Activated CD8-positive, alpha-beta T cell treated with anti-CD3 and anti-CD28 coated beads for 36 hours (primary cell): ENCODE measurements at regions of chr17 and their contacts with region 1.

Region 1: GRCh38 chr17:40474419-40475002 is 26.9 kb downstream of the TNS4 start:
- DNase-seq: no peak
- ATAC-seq: no peak
- H3K4me3 Mint-ChIP-seq: no peak overlapping the region
- H3K27ac Mint-ChIP-seq: no peak overlapping the region
- H3K4me1 Mint-ChIP-seq: peaks cover 16% of the 10 kb centered on the region
- H3K27me3 Mint-ChIP-seq: no peaks in the 10 kb centered on the region
- CTCF ChIP-seq: no peak

Region 2: GRCh38 chr17:40362696-40363110 is 111.8 kb before region 1 on chr17:
- CTCF ChIA-PET with region 1: interaction called, 26 read pairs
- POLR2A ChIA-PET with region 1: no interaction called
- intact Hi-C with region 1: no loop called
- DNase-seq: peak; percentile 93
- ATAC-seq: peak; percentile 90
- H3K4me3 Mint-ChIP-seq: peak overlapping the region; percentile 72
- H3K27ac Mint-ChIP-seq: no peak overlapping the region
- H3K4me1 Mint-ChIP-seq: peaks cover 6% of the 10 kb centered on the region
- H3K27me3 Mint-ChIP-seq: peaks cover 4% of the 10 kb centered on the region
- CTCF ChIP-seq: peak; percentile 88

Region 3: GRCh38 chr17:40422990-40423616 is 51.4 kb before region 1 on chr17:
- CTCF ChIA-PET with region 1: interaction called, 10 read pairs
- POLR2A ChIA-PET with region 1: interaction called, 5 read pairs
- intact Hi-C with region 1: no loop called
- DNase-seq: no peak
- ATAC-seq: no peak
- H3K4me3 Mint-ChIP-seq: no peak overlapping the region
- H3K27ac Mint-ChIP-seq: no peak overlapping the region
- H3K4me1 Mint-ChIP-seq: peaks cover 37% of the 10 kb centered on the region
- H3K27me3 Mint-ChIP-seq: no peaks in the 10 kb centered on the region
- CTCF ChIP-seq: no peak

Region 4: DNA sequence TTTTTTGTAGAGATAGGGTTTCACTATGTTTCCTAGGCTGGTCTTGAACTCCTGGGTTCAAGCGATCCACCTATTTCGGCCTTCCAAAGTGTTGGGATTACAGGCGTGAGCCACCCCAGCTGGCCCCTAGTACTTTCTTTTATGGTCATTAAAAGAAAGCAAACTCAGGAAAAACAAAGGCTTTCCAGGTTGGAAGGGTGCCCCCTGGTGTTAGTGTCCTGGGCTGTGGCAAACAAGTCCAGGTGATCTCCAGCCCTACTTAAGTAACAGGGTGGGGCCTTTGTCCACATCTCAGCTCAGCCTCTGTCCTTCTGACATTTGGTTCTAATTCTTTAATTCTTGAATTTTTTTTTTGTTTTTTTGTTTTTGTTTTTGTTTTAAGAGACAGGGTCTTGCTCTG is 24.3 kb before region 1 on chr17:
- CTCF ChIA-PET with region 1: interaction called, 14 read pairs
- POLR2A ChIA-PET with region 1: interaction called, 3 read pairs
- intact Hi-C with region 1: no loop called
- DNase-seq: peak; percentile 67
- ATAC-seq: no peak
- H3K4me3 Mint-ChIP-seq: no peak overlapping the region
- H3K27ac Mint-ChIP-seq: no peak overlapping the region
- H3K4me1 Mint-ChIP-seq: peaks cover 17% of the 10 kb centered on the region
- H3K27me3 Mint-ChIP-seq: peaks cover 4% of the 10 kb centered on the region
- CTCF ChIP-seq: peak; percentile 43

Region 5: DNA sequence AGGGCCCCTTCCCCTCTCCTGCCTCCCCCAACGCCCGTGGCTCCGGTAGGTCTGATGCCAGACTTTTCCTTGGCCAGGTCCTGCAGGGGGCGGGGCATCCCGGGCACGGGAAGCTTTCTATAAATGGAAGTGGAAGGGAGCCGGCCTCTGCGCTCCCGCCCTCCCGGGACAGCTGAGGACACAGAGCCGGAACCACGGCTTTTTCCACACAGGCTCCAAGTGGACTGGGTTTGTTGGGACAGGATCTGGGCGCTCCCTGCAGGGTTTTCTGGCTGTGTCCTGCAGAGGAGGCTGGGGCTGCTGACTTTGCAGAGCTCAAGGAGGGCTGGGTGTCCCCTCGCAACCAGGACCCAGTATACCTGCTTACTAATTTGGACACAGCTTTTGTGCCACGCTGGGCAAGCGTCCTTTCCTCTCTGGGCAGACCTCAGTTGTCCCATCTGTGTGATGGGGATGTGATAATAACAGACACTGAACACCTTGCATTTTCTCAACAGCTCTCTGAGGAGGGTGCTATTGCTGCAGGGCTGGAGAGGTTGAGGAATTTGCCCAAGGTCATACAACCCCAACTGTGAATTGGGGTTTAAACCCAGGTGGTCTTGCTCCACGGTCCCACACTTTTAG is 25.2 kb after region 1 on chr17:
- CTCF ChIA-PET with region 1: interaction called, 20 read pairs
- POLR2A ChIA-PET with region 1: no interaction called
- intact Hi-C with region 1: no loop called
- DNase-seq: no peak
- ATAC-seq: no peak
- H3K4me3 Mint-ChIP-seq: no peak overlapping the region
- H3K27ac Mint-ChIP-seq: no peak overlapping the region
- H3K4me1 Mint-ChIP-seq: no peaks in the 10 kb centered on the region
- H3K27me3 Mint-ChIP-seq: peaks cover 8% of the 10 kb centered on the region
- CTCF ChIP-seq: no peak

Region 6: GRCh38 chr17:40559954-40560591 is 85.6 kb after region 1 on chr17:
- CTCF ChIA-PET with region 1: interaction called, 10 read pairs
- POLR2A ChIA-PET with region 1: interaction called, 3 read pairs
- intact Hi-C with region 1: no loop called
- DNase-seq: peak; percentile 86
- ATAC-seq: peak; percentile 13
- H3K4me3 Mint-ChIP-seq: peak overlapping the region; percentile 96
- H3K27ac Mint-ChIP-seq: peak overlapping the region; percentile 99
- H3K4me1 Mint-ChIP-seq: peaks cover 61% of the 10 kb centered on the region
- H3K27me3 Mint-ChIP-seq: no peaks in the 10 kb centered on the region
- CTCF ChIP-seq: peak; percentile 98

Region 7: GRCh38 chr17:40588552-40588951 is 114.0 kb after region 1 on chr17:
- CTCF ChIA-PET with region 1: no interaction called
- POLR2A ChIA-PET with region 1: no interaction called
- intact Hi-C with region 1: no loop called
- DNase-seq: no peak
- ATAC-seq: no peak
- H3K4me3 Mint-ChIP-seq: no peak overlapping the region
- H3K27ac Mint-ChIP-seq: peak overlapping the region; percentile 57
- H3K4me1 Mint-ChIP-seq: peaks cover 69% of the 10 kb centered on the region
- H3K27me3 Mint-ChIP-seq: no peaks in the 10 kb centered on the region
- CTCF ChIP-seq: no peak